CD8-positive, alpha-beta T cell (primary cell): ENCODE measurements at regions of chr19 and their contacts with region 1.

Region 1: GRCh38 chr19:49497047-49497788 is 984 bp downstream of the RPS11 start:
- DNase-seq: peak; percentile 54 to 91 (median 78)
- ATAC-seq: peak; percentile 9
- H3K4me3 ChIP-seq: peak overlapping the region; percentile 95 to 96
- H3K4me3 Mint-ChIP-seq: peak overlapping the region; percentile 100
- H3K27ac ChIP-seq: peak overlapping the region; percentile 95 to 98
- H3K27ac Mint-ChIP-seq: peak overlapping the region; percentile 98
- H3K4me1 ChIP-seq: peaks cover 39% of the 10 kb centered on the region
- H3K4me1 Mint-ChIP-seq: peaks cover 59% of the 10 kb centered on the region
- H3K27me3 ChIP-seq: no peaks in the 10 kb centered on the region
- H3K27me3 Mint-ChIP-seq: no peaks in the 10 kb centered on the region
- CTCF ChIP-seq: no peak

Region 2: GRCh38 chr19:49468746-49469447 is 28.3 kb before region 1 on chr19:
- CTCF ChIA-PET with region 1: interaction called, 10 read pairs
- POLR2A ChIA-PET with region 1: interaction called, 16 read pairs
- intact Hi-C with region 1: loop called in 1 of 2 experiments (anchors 1 kb)
- DNase-seq: peak; percentile 73 to 98 (median 91)
- ATAC-seq: peak; percentile 70
- H3K4me3 ChIP-seq: peak overlapping the region in 1 of 2 experiments; percentile 9
- H3K4me3 Mint-ChIP-seq: peak overlapping the region; percentile 69
- H3K27ac ChIP-seq: peak overlapping the region; percentile 88 to 90
- H3K27ac Mint-ChIP-seq: peak overlapping the region; percentile 99
- H3K4me1 ChIP-seq: peaks cover 55% of the 10 kb centered on the region
- H3K4me1 Mint-ChIP-seq: peaks cover 44% of the 10 kb centered on the region
- H3K27me3 ChIP-seq: no peaks in the 10 kb centered on the region
- H3K27me3 Mint-ChIP-seq: no peaks in the 10 kb centered on the region
- CTCF ChIP-seq: no peak

Region 3: DNA sequence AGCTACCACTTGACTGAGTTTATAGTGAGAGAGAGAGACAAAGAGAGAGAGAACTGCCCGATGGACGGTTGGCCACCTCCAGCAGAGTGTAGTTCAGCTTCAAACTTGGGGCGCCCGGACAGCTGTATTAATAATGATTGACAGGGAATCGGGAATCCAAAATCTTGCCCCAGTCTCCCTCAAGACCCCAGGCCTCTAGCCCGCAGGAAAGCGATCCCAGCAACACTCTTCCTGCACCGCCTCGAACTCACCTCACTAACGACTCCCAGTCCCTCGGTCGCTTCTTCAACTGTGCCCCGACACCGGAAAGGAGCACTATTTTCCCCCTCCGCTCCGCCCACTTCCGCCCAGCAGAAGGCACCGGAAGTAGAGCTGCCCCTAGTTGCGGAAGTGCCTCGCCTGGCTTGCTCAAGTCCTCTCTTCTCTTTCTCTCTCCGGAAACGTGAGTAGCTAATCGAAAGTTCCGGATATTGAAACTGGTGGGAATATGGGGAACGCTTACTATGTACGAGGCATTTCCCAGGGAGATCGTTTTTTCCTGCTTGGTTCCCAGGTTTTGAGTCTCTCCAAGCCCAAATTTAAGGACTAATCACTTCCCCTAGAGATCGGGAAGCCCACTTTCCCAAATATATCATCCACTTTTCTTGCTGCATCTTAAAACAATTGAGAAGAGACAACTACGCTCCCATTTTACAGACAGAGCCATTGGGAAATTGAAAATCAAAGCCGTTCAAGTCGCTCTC is 83.2 kb after region 1 on chr19 and contains the start of gene NOSIP:
- CTCF ChIA-PET with region 1: interaction called, 5 read pairs
- POLR2A ChIA-PET with region 1: interaction called, 14 read pairs
- intact Hi-C with region 1: no loop called
- DNase-seq: peak; percentile 93 to 98 (median 97)
- ATAC-seq: peak; percentile 97
- H3K4me3 ChIP-seq: peak within 1 kb of the TSS; percentile 68 to 71
- H3K4me3 Mint-ChIP-seq: peak within 1 kb of the TSS; percentile 95
- H3K27ac ChIP-seq: peak within 1 kb of the TSS; percentile 63 to 66
- H3K27ac Mint-ChIP-seq: peak within 1 kb of the TSS; percentile 94
- H3K4me1 ChIP-seq: peaks cover 22% of the 10 kb centered on the region
- H3K4me1 Mint-ChIP-seq: peaks cover 39% of the 10 kb centered on the region
- H3K27me3 ChIP-seq: no peaks in the 10 kb centered on the region
- H3K27me3 Mint-ChIP-seq: no peaks in the 10 kb centered on the region
- CTCF ChIP-seq: no peak
- total RNA-seq, gene NOSIP: 103 to 110 TPM

Region 4: DNA sequence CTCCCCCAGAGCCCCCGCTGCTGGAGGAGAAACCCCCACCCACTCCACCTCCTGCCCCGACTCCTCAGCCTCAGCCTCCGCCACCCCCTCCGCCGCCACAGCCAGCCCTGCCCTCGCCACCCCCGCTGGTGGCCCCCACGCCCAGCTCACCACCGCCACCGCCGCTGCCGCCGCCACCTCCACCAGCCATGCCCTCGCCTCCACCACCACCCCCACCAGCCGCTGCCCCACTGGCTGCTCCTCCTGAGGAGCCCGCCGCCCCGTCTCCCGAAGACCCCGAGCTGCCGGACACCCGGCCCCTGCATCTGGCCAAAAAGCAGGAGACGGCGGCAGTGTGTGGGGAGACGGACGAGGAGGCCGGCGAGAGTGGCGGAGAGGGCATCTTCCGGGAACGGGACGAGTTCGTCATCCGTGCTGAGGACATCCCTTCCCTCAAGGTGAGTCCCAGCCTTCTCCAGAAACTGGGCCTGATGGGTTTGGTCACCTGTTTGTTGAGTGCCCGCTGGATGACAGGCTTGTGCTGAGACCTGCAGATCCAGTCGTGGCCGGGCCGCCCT is 104.3 kb after region 1 on chr19:
- CTCF ChIA-PET with region 1: no interaction called
- POLR2A ChIA-PET with region 1: no interaction called
- intact Hi-C with region 1: no loop called
- DNase-seq: no peak
- ATAC-seq: no peak
- H3K4me3 ChIP-seq: no peak overlapping the region
- H3K4me3 Mint-ChIP-seq: no peak overlapping the region
- H3K27ac ChIP-seq: no peak overlapping the region
- H3K27ac Mint-ChIP-seq: no peak overlapping the region
- H3K4me1 ChIP-seq: no peaks in the 10 kb centered on the region
- H3K4me1 Mint-ChIP-seq: peaks cover 26% of the 10 kb centered on the region
- H3K27me3 ChIP-seq: no peaks in the 10 kb centered on the region
- H3K27me3 Mint-ChIP-seq: no peaks in the 10 kb centered on the region
- CTCF ChIP-seq: no peak

Region 5: GRCh38 chr19:49640113-49640898 is 143.1 kb after region 1 on chr19 and contains the start of gene RRAS:
- CTCF ChIA-PET with region 1: no interaction called
- POLR2A ChIA-PET with region 1: interaction called, 3 read pairs
- intact Hi-C with region 1: loop called in 1 of 2 experiments (anchors 1 kb)
- DNase-seq: peak; percentile 98 to 100 (median 99)
- ATAC-seq: peak; percentile 66
- H3K4me3 ChIP-seq: peak within 1 kb of the TSS; percentile 64 to 75
- H3K4me3 Mint-ChIP-seq: peak within 1 kb of the TSS; percentile 95
- H3K27ac ChIP-seq: peak within 1 kb of the TSS; percentile 64 to 98
- H3K27ac Mint-ChIP-seq: peak within 1 kb of the TSS; percentile 96
- H3K4me1 ChIP-seq: peaks cover 51% of the 10 kb centered on the region
- H3K4me1 Mint-ChIP-seq: peaks cover 58% of the 10 kb centered on the region
- H3K27me3 ChIP-seq: no peaks in the 10 kb centered on the region
- H3K27me3 Mint-ChIP-seq: no peaks in the 10 kb centered on the region
- CTCF ChIP-seq: no peak
- total RNA-seq, gene RRAS: 3.6 to 4.9 TPM